Ascending aorta (tissue), 2 donors: ENCODE measurements at regions of chr17 and their contacts with region 1.

Region 1: GRCh38 chr17:59427425-59427921 is 96.0 kb downstream of the YPEL2 start:
- DNase-seq: peak in 1 of 2 donors; percentile 80
- H3K4me3 ChIP-seq: no peak overlapping the region
- H3K27ac ChIP-seq: peak overlapping the region; percentile 94
- H3K4me1 ChIP-seq: peaks cover 35 to 66% of the 10 kb centered on the region in 2 donors
- H3K27me3 ChIP-seq: no peaks in the 10 kb centered on the region
- CTCF ChIP-seq: no peak

Region 2: DNA sequence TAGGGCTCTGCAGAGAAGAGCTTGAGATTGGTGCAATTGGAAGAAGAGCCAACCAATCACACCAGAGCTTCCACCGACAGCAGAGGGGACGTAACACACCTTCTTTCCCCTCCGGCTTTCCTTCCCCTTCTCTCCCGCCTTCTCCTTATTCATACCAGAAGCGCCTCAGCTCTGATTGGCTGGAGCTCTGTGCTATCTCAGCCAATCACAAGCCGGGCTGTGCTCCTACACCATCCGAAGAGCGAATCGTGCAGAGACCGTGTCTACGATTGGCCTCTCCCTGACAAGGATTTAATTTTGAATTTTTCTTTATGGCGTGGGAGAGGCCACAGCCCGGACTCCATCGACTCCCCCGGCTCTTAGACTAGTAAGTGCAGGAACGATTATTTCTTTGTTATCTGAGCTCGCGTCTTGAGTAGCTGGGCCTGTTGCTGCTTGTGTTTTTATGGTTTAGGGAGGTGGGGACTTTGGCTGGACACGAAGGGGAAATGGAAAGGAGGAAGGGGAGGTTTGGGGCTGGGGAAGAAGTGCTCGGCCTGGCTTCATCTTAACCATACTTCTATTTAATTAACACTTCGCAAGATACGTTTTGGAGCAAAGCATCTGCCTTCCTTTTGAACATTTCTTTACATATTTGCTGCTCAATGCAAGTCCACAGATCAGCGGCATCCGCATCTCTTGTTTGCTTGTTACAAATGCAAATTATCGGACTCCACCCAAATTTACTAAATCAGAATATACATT is 271.9 kb before region 1 on chr17 and contains the start of gene PRR11:
- intact Hi-C with region 1: no loop called
- DNase-seq: peak; percentile 94 to 98
- H3K4me3 ChIP-seq: peak within 1 kb of the TSS; percentile 89 to 92
- H3K27ac ChIP-seq: peak within 1 kb of the TSS; percentile 84 to 87
- H3K4me1 ChIP-seq: peaks cover 0 to 22% of the 10 kb centered on the region in 2 donors
- H3K27me3 ChIP-seq: no peaks in the 10 kb centered on the region
- CTCF ChIP-seq: no peak
- total RNA-seq, gene PRR11: 0.11 TPM

Region 3: GRCh38 chr17:59366773-59367657 is 60.5 kb before region 1 on chr17:
- intact Hi-C with region 1: loop called (anchors 5 kb)
- DNase-seq: peak in 1 of 2 donors; percentile 81
- H3K4me3 ChIP-seq: peak overlapping the region in 1 of 2 donors; percentile 1
- H3K27ac ChIP-seq: peak overlapping the region; percentile 94 to 95
- H3K4me1 ChIP-seq: peaks cover 65 to 94% of the 10 kb centered on the region in 2 donors
- H3K27me3 ChIP-seq: no peaks in the 10 kb centered on the region
- CTCF ChIP-seq: no peak

Region 4: DNA sequence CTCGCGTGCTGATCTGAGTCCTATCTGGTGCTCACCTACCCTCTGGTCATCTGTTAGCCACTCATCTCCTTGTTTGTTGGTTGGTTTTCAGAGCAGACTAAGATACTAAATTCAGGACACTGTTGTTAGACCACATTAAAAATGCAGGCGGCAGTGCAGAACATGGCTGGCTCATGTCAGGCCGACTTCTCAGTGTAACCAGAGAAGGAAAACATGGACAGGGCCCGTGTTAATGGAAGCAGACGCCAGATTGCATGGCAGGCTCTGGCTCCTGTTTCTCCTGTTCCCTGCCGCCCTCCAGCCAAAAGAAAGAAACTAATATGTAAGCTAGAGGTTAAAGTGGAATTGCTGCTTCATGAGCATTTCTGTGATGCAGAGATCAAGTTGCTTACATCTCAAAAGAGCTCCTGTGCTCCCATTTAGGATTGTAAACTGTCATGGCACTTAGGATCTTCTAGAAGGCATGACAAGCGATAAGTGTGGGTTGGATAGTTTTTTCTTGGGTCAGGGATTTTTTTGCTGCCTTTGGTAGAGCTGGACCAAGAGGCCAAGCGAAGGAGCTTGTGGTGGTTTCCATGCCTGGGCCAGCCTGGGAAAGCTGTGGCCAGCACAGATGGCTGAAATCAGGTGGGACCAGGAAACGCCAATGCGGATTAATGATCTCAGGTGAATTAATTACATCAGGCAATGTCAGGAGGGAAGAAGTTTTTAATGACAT is 40.0 kb before region 1 on chr17:
- intact Hi-C with region 1: loop called (anchors 2 kb)
- DNase-seq: no peak
- H3K4me3 ChIP-seq: no peak overlapping the region
- H3K27ac ChIP-seq: peak overlapping the region; percentile 66 to 74
- H3K4me1 ChIP-seq: peaks cover 5 to 40% of the 10 kb centered on the region in 2 donors
- H3K27me3 ChIP-seq: no peaks in the 10 kb centered on the region
- CTCF ChIP-seq: peak in 1 of 3 experiments; percentile 13